Activated CD4-positive, alpha-beta T cell treated with anti-CD3 and anti-CD28 coated beads for 36 hours (primary cell): ENCODE measurements at regions of chr5 and their contacts with region 1.

Region 1: DNA sequence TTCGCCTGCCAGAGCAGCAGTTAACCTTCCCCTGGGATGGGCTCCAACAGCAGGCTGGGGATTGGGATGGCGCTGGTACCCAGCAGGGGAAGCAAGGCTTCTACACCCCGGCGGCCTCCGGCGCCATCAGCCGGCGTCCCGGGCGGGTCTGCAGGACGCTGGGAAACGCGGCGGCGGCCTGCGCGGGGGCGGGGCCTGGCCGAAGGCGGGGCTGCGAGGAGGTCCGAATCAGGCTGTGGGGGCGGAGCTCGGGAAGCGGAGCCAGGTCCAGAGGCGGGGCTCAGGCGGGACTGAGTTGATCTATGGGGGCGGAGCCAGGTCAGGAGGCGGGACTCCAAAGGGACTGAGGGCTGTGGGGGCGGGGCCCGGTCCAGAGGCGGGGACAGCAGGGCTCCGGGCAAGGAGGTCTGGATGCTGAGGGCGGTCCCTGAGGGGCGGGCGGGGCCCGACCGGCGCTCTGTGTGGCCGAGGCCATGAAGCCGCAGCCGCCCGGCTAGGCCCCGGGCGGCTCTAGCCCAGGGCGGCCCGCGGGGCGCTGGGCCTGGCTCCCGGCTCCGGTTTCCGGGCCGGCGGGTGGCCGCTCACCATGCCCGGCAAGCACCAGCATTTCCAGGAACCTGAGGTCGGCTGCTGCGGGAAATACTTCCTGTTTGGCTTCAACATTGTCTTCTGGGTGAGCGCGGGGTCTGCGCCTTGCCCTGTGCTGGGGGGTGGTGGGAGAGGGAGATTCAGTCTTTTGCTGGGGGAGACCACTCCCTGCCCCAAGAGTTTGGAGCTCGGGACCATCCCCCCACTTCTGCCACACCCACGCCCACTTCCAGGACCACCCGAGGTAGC is at the start of gene TSPAN17:
- DNase-seq: peak; percentile 100
- ATAC-seq: peak; percentile 95
- H3K4me3 Mint-ChIP-seq: peak within 1 kb of the TSS; percentile 81
- H3K27ac Mint-ChIP-seq: peak within 1 kb of the TSS; percentile 87
- H3K4me1 Mint-ChIP-seq: peaks cover 36% of the 10 kb centered on the region
- H3K27me3 Mint-ChIP-seq: no peaks in the 10 kb centered on the region
- total RNA-seq, gene TSPAN17: 19.4 to 25.2 TPM

Region 2: DNA sequence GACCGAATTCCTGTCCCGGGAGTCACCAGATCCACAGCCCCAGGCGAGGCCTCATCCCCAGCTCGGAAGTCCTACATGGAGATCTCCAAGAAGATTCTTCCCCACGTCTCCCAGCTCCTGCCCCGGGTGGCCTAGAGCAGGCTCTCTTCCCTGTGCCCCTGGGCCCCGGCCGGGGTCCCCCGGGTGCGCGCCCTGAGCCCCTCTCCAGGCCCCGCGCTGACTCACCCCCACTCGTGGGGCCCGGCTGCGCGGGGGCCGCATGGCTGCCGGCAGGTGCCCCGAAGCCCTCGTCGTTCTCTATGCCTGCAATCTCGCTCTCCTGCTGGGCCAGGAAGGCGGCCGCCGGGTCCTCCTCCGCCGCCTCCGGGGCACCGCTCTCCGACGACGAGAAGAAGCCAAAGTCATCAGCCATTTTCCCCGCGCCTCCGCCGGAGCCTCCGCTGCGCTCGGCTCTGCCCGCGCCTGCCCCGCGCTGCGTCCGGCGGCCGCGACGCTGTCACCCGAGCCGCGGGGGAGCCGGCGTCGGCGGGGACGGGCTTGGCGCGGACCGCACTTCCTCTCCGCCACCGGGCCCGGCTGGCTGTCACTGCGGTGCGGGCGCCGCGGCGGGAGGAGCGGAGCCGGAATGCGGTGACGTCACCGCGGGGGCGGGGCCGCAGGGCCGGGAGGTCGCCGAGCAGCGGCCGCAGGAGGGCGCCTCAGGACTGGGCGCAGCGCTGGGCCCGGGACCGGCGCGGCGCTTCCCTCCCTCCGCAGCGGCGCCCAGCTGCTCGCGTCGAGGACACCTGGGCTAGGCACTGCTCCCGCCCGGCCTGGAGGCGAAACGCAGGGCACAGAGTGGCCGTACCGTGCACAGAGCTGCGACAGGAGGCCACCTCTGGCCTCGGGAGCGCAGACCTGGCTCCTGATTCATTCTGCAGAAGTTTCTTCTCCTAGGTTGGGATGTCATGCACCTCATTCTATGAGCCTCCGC is 231.0 kb before region 1 on chr5 and contains the start of gene CLTB:
- CTCF ChIA-PET with region 1: no interaction called
- POLR2A ChIA-PET with region 1: no interaction called
- intact Hi-C with region 1: loop called in 1 of 2 experiments (anchors 1 kb)
- DNase-seq: peak; percentile 94
- ATAC-seq: peak; percentile 96
- H3K4me3 Mint-ChIP-seq: peak within 1 kb of the TSS; percentile 74
- H3K27ac Mint-ChIP-seq: peak within 1 kb of the TSS; percentile 76
- H3K4me1 Mint-ChIP-seq: peaks cover 36% of the 10 kb centered on the region
- H3K27me3 Mint-ChIP-seq: no peaks in the 10 kb centered on the region
- total RNA-seq, gene CLTB: 39.3 to 47.8 TPM

Region 3: DNA sequence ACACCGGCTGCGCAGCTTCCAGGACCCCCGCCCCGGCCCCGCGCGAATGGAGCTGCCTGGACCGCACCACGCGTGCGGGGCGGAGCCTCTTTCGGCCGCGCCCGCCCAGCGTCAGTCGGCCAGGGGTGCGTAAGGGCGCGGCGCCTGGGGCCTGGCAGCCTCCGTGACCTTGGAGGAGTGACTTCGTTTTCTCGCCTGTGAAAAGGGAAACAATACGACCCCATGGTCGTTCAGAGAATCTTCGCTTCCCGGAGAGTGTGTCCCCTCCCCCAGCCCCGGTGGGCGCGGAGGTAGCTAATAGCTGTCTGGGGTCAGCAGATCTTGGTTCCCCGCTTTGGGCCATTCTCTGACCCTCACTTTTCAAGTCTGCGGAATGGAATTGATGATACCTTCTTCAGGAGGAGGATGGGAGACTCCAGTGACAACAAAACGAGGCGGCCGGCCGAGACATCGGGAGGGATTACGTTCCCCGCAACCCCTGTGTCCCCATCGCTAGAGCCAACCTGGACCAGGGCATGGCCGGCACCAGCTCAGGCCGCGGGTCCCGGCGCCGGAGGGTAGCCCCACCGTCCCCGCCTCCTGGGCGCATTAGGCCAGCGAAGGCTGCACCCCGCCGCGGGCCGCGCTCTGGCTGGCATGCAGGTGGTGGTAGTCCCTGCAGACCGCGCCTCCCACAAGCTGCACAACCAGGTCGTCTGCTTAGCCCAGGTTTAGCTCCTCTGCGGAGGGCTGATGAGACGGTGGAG is 103.6 kb before region 1 on chr5:
- CTCF ChIA-PET with region 1: no interaction called
- POLR2A ChIA-PET with region 1: interaction called, 3 read pairs
- intact Hi-C with region 1: loop called (anchors 1 to 2 kb)
- DNase-seq: peak; percentile 87
- ATAC-seq: peak; percentile 75
- H3K4me3 Mint-ChIP-seq: peak overlapping the region; percentile 85
- H3K27ac Mint-ChIP-seq: peak overlapping the region; percentile 93
- H3K4me1 Mint-ChIP-seq: peaks cover 61% of the 10 kb centered on the region
- H3K27me3 Mint-ChIP-seq: no peaks in the 10 kb centered on the region

Region 4: GRCh38 chr5:176629853-176630712 is 17.2 kb before region 1 on chr5 and contains the starts of genes EIF4E1B and SNCB:
- CTCF ChIA-PET with region 1: interaction called, 4 read pairs
- POLR2A ChIA-PET with region 1: interaction called, 3 read pairs
- intact Hi-C with region 1: loop called in 1 of 2 experiments (anchors 1 kb)
- DNase-seq: peak; percentile 81
- ATAC-seq: peak; percentile 96
- H3K4me3 Mint-ChIP-seq: peak within 1 kb of the TSS; percentile 13
- H3K27ac Mint-ChIP-seq: no peak within 1 kb of the TSS
- H3K4me1 Mint-ChIP-seq: peaks cover 9% of the 10 kb centered on the region
- H3K27me3 Mint-ChIP-seq: peaks cover 55% of the 10 kb centered on the region
- total RNA-seq, gene EIF4E1B: not detected
- total RNA-seq, gene SNCB: 0.46 to 0.55 TPM

Region 5: DNA sequence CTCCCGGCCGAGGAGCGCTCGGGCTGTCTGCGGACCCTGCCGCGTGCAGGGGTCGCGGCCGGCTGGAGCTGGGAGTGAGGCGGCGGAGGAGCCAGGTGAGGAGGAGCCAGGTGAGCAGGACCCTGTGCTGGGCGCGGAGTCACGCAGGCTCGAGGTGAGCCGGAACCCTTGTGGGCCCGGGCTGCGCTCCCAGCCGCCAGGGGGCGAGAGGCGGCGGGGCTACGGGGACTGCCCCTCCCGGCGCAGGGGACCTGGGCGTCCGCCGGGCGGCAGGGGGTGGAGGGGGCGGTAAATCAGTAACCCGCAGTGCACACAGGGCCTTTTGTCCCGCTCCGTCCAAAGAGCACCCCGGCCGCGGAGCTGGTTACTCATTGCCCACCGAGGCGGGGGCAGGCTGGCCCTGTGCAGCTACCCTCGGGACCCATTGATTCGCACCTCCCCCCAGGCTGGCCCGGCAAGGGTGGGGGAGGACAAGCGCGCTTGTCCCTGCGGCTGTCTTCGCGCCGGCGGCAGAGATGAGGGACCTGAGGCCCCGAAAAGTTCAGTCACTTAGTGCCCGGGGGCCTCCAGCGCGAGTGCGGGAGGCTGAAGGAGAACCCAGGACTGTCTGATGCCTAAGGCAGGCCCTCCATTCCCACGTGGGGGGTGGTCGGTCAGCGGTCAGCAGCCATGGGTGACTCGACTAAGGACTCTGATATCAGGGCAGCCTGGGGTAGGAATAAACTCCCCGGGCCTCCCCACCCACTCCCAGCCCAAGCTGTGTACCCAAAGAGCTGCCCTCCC is 439.9 kb after region 1 on chr5:
- CTCF ChIA-PET with region 1: no interaction called
- POLR2A ChIA-PET with region 1: no interaction called
- intact Hi-C with region 1: loop called in 1 of 2 experiments (anchors 1 kb)
- DNase-seq: peak; percentile 78
- ATAC-seq: peak; percentile 86
- H3K4me3 Mint-ChIP-seq: peak overlapping the region; percentile 13
- H3K27ac Mint-ChIP-seq: no peak overlapping the region
- H3K4me1 Mint-ChIP-seq: peaks cover 2% of the 10 kb centered on the region
- H3K27me3 Mint-ChIP-seq: peaks cover 18% of the 10 kb centered on the region